Cardiac septum (tissue), 1 donor: ENCODE measurements at regions of chr13 and their contacts with region 1.

Region 1: DNA sequence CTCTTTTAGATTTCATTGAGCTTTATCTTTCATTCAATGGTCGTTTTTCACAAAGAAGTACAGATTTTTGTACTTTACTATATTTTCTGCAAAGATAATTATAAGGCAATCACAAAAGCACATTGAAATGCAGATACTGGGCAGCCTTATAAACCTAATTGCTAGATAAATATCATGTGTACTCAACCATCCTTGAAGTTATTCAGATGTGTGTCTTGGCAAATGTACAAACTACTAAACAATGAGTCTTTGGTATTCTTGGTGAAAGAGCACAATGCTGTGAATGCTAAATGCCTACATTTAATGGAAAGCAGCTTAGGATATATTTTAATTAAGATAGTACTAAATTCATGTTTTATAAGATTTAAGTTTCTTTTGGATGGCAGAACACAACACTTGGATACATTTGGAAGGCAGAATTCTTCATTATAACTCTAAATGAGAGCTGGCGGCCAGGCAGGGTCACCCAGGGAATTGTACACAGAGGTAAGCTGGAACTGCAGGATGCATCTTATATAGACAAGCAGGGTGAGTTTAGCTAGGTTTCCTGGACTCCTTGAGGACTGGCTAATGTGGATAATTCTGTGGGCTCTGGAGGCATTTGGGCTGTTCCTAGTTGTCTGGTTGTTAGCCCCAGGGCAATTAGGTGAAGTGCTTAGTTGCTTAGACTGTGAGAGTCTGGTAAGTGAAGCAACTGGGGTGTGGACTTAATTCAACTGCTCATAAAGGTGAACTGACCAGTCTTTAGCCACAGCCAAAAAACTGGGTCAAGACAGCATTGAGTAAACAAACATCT is 286.6 kb downstream of the PCDH20 start:
- DNase-seq: no peak

Region 2: GRCh38 chr13:61214551-61214950 is 85.5 kb after region 1 on chr13:
- intact Hi-C with region 1: no loop called
- DNase-seq: no peak

Region 3: DNA sequence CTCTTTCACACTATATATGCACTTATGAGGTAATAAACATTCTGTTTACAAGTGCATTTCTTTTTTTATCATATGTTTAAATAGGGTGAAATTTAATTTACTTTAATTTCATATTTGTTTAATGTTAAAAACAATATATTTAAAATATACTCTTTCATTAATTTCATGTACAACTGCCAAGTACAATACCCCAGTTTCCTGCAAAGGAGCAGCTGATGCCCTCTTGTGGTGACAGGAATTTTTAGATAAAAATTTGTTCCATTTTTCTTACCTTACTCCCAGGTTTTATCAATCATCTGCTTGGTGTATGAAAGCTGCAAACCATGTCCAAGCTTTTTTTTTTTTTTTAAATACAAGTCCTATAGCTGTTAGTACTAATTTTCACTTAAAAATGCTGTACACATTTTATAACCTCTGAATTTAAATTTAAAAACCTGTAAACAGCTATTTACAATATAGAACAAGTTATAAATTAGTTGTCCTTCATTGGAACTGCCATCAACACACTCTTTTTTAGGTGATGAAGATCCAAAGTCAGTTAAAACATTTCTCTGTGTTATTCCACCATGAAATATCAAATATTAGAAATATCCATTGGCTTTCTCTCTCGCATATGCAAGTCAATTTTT is 281.7 kb after region 1 on chr13:
- intact Hi-C with region 1: loop called (anchors 10 kb)
- DNase-seq: no peak

Region 4: GRCh38 chr13:61908906-61909615 is 780.0 kb after region 1 on chr13:
- intact Hi-C with region 1: no loop called
- DNase-seq: no peak